ENCODE measurements at regions of chr10 and their contacts with region 1.

Region 1: GRCh38 chr10:67697724-67698131 is 1.7 kb upstream of the CTNNA3 start:
- DNase-seq: peak; percentile 67
- ATAC-seq: peak; percentile 71
- H3K4me3 ChIP-seq: no peak overlapping the region
- H3K4me3 Mint-ChIP-seq: no peak overlapping the region
- H3K27ac ChIP-seq: no peak overlapping the region
- H3K27ac Mint-ChIP-seq: no peak overlapping the region
- H3K4me1 ChIP-seq: no peaks in the 10 kb centered on the region
- H3K4me1 Mint-ChIP-seq: no peaks in the 10 kb centered on the region
- H3K27me3 ChIP-seq: peaks cover 0 to 9% (median 0%) of the 10 kb centered on the region in 4 experiments
- H3K27me3 Mint-ChIP-seq: peaks cover 46% of the 10 kb centered on the region
- CTCF ChIP-seq: peak; percentile 82

Region 2: GRCh38 chr10:67666416-67667034 is 31.2 kb before region 1 on chr10:
- CTCF ChIA-PET with region 1: interaction called, 44 read pairs
- POLR2A ChIA-PET with region 1: no interaction called
- intact Hi-C with region 1: loop called (anchors 2 kb)
- DNase-seq: peak; percentile 41
- ATAC-seq: no peak
- H3K4me3 ChIP-seq: no peak overlapping the region
- H3K4me3 Mint-ChIP-seq: no peak overlapping the region
- H3K27ac ChIP-seq: no peak overlapping the region
- H3K27ac Mint-ChIP-seq: no peak overlapping the region
- H3K4me1 ChIP-seq: no peaks in the 10 kb centered on the region
- H3K4me1 Mint-ChIP-seq: no peaks in the 10 kb centered on the region
- H3K27me3 ChIP-seq: peaks cover 0 to 3% (median 1%) of the 10 kb centered on the region in 4 experiments
- H3K27me3 Mint-ChIP-seq: peaks cover 8% of the 10 kb centered on the region
- CTCF ChIP-seq: peak; percentile 72

Region 3: GRCh38 chr10:67722113-67722512 is 24.4 kb after region 1 on chr10:
- CTCF ChIA-PET with region 1: interaction called, 10 read pairs
- POLR2A ChIA-PET with region 1: no interaction called
- intact Hi-C with region 1: no loop called
- DNase-seq: peak; percentile 15
- ATAC-seq: no peak
- H3K4me3 ChIP-seq: no peak overlapping the region
- H3K4me3 Mint-ChIP-seq: no peak overlapping the region
- H3K27ac ChIP-seq: no peak overlapping the region
- H3K27ac Mint-ChIP-seq: no peak overlapping the region
- H3K4me1 ChIP-seq: peaks cover 0 to 3% of the 10 kb centered on the region in 2 donors
- H3K4me1 Mint-ChIP-seq: peaks cover 6% of the 10 kb centered on the region
- H3K27me3 ChIP-seq: no peaks in the 10 kb centered on the region
- H3K27me3 Mint-ChIP-seq: no peaks in the 10 kb centered on the region
- CTCF ChIP-seq: no peak

Region 4: GRCh38 chr10:67764012-67764822 is 66.5 kb after region 1 on chr10:
- CTCF ChIA-PET with region 1: interaction called, 18 read pairs
- POLR2A ChIA-PET with region 1: interaction called, 4 read pairs
- intact Hi-C with region 1: no loop called
- DNase-seq: peak; percentile 99
- ATAC-seq: peak; percentile 77
- H3K4me3 ChIP-seq: peak overlapping the region; percentile 74 to 93 (median 92)
- H3K4me3 Mint-ChIP-seq: peak overlapping the region; percentile 91
- H3K27ac ChIP-seq: peak overlapping the region; percentile 84 to 86
- H3K27ac Mint-ChIP-seq: peak overlapping the region; percentile 100
- H3K4me1 ChIP-seq: peaks cover 9 to 20% of the 10 kb centered on the region in 2 donors
- H3K4me1 Mint-ChIP-seq: peaks cover 28% of the 10 kb centered on the region
- H3K27me3 ChIP-seq: no peaks in the 10 kb centered on the region
- H3K27me3 Mint-ChIP-seq: no peaks in the 10 kb centered on the region
- CTCF ChIP-seq: no peak

Region 5: DNA sequence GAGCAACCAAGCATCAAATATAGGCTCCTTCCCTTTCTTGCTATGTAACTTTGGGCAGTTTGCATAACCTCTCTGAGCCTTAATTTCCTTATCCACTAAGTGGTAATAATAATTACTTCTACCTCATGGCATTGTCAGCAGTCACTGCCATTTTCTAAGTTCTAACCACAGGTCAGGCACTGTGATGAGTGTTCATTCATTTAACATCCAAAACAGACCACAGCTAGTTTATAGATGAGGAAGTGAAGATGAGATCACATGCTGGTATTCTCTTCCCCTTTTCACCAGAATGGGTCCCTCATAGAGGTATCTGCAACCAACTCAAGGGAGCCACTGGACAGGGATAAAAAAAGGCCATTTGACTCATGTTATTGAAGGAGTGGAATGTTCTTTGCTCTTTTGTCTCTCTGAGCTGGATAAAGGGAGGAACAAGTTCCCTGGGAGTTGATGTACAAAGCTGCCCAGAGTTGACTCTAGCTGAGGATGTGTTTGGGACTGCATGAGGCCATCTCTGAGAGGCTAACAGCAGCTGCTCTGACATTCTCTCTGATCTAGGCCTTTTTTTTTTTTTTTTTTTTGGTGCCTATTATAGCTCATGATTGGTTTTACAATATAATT is 75.3 kb after region 1 on chr10:
- CTCF ChIA-PET with region 1: interaction called, 512 read pairs
- POLR2A ChIA-PET with region 1: interaction called, 3 read pairs
- intact Hi-C with region 1: no loop called
- DNase-seq: peak; percentile 81
- ATAC-seq: peak; percentile 92
- H3K4me3 ChIP-seq: no peak overlapping the region
- H3K4me3 Mint-ChIP-seq: peak overlapping the region; percentile 64
- H3K27ac ChIP-seq: peak overlapping the region; percentile 62 to 78
- H3K27ac Mint-ChIP-seq: peak overlapping the region; percentile 89
- H3K4me1 ChIP-seq: peaks cover 41 to 45% of the 10 kb centered on the region in 2 donors
- H3K4me1 Mint-ChIP-seq: peaks cover 47% of the 10 kb centered on the region
- H3K27me3 ChIP-seq: no peaks in the 10 kb centered on the region
- H3K27me3 Mint-ChIP-seq: no peaks in the 10 kb centered on the region
- CTCF ChIP-seq: no peak

Measured in B cell (primary cell).